A549 (cell line): ENCODE measurements at regions of chr5 and their contacts with region 1.

Region 1: GRCh38 chr5:141040771-141041426 is 10.3 kb upstream of the PCDHB1 start:
- DNase-seq: peak; percentile 89 to 96
- ATAC-seq: peak; percentile 90 to 92
- H3K4me3 ChIP-seq: peak overlapping the region; percentile 48
- H3K27ac ChIP-seq: peak overlapping the region; percentile 56 to 72
- H3K4me1 ChIP-seq: peaks cover 8% of the 10 kb centered on the region; the same call in 1 of the 3 replicates
- CTCF ChIP-seq: peak; percentile 87
- EP300 ChIP-seq: no peak
- POLR2A ChIP-seq: peak; percentile 55
- RAD21 ChIP-seq: peak; percentile 92

Region 2: DNA sequence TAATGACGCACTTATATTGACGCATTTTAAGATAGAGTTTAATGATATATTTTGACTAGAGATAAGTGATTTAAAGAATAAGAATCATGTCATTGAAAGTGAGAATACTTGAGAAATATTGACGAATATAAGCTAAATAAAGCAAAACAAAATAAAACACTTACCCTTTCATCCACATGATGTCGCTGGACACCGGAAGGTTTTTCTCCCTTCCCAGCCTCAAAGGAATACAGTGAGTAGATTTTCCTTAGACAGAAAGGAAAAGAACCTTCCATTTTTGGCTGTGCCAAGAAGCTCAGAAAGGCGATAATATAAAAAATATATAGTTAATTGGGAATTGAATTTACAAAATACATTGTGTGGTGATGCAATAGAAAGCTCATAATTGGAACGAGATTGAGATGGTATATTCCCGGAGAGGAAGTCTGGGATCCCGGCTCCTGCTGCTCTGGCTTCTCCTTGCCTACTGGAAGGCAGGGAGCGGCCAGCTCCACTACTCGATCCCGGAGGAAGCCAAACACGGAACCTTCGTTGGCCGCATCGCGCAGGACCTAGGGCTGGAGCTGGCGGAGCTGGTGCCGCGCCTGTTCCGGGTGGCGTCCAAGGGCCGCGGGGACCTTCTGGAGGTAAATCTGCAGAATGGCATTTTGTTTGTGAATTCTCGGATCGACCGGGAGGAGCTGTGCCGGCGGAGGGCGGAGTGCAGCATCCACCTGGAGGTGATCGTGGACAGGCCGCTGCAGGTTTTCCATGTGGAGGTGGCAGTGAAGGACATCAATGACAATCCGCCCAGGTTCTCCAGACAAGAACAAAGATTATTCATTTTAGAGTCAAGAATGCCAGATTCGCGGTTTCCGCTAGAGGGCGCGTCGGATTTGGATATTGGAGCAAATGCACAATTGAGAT is 219.3 kb before region 1 on chr5 and contains the start of gene PCDHA5:
- CTCF ChIA-PET with region 1: interaction called, 61 read pairs
- POLR2A ChIA-PET with region 1: interaction called, 17 read pairs
- DNase-seq: peak; percentile 69 to 73
- ATAC-seq: peak; percentile 85 to 92
- H3K4me3 ChIP-seq: peak within 1 kb of the TSS; percentile 57
- H3K27ac ChIP-seq: peak within 1 kb of the TSS; percentile 53 to 74
- H3K4me1 ChIP-seq: no peaks in the 10 kb centered on the region
- CTCF ChIP-seq: peak; percentile 63
- EP300 ChIP-seq: no peak
- POLR2A ChIP-seq: no peak
- RAD21 ChIP-seq: peak; percentile 43 to 65; a peak in 4 of 5 replicates
- polyA plus RNA-seq, gene PCDHA5: 0.32 and 0.62 TPM in 2 replicates

Region 3: DNA sequence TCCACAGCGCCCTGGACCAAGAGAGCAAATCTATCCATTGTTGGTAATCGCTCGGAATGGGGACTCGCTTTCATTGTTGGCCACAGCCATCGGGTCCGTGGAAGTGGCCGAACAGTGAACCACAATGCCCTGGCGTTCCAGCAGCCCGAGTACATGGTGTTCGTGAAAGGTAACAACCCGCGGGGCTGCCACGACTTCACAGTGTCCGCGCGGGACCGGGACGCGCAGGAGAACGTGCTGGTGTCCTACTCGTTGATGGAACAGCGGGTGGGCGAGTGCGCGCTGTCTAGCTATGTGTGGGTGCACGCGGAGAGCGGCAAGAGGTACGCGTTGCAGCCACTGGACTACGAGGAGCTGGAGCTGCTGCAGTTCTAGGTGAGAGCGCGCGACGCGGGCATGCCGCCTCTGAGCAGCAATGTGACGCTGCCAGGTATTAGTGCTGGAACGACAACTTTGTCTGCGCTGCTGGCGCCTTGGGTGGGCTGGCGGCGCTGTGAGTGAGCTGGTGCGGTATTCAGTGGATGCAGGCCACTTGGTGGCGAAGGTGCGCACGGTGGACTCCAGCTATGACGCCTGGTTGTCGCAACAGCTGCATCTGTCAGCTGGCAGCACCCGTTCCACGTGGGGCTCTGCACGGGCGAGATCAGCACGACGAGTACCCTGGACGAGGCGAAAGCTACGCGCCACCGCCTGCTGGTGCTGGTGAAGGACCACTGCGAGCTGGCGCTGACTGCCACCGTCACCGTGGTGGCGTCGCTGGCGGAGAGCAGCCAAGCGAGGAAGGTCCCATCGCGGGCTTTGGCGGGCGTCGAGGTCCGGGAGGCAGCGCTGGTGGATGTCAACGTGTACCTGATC is 178.2 kb before region 1 on chr5:
- CTCF ChIA-PET with region 1: interaction called, 18 read pairs
- POLR2A ChIA-PET with region 1: no interaction called
- DNase-seq: no peak
- ATAC-seq: no peak
- H3K4me3 ChIP-seq: no peak overlapping the region
- H3K27ac ChIP-seq: no peak overlapping the region
- H3K4me1 ChIP-seq: no peaks in the 10 kb centered on the region
- CTCF ChIP-seq: no peak
- EP300 ChIP-seq: no peak
- POLR2A ChIP-seq: no peak
- RAD21 ChIP-seq: no peak

Region 4: DNA sequence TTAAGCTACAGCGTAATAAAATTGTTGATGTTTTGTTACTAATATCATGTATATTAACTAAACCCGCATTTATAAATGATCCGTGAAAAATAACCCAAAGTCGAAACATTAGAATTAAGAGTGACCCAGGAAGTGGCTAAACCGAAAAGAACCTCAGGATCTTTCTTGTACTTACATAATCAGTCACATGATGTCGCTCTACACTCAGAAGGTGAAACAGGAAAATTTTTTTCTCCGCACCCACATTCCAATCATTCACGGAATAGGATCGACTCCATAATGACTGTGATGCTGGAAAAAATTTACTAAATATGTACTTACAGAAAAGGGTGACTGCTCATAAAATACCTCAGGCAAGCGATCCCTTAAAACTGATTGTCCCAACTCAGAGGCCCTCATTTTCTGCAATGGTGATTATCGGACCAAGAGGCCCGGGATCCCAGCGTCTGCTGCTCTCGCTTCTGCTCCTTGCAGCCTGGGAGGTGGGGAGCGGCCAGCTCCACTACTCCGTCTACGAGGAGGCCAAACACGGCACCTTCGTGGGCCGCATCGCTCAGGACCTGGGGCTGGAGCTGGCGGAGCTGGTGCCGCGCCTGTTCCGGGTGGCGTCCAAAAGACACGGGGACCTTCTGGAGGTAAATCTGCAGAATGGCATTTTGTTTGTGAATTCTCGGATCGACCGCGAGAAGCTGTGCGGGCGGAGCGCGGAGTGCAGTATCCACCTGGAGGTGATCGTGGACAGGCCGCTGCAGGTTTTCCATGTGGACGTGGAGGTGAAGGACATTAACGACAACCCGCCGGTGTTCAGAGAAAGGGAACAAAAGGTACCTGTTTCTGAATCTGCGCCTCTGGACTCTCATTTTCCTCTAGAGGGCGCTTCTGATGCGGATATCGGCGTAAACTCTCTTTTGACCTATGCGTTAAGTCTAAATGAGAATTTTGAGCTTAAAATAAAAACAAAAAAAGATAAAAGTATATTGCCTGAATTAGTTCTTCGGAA is 165.5 kb before region 1 on chr5 and contains the start of gene PCDHA12:
- CTCF ChIA-PET with region 1: interaction called, 59 read pairs
- POLR2A ChIA-PET with region 1: interaction called, 26 read pairs
- DNase-seq: peak; percentile 67 to 72
- ATAC-seq: peak; percentile 84 to 90
- H3K4me3 ChIP-seq: peak within 1 kb of the TSS; percentile 54
- H3K27ac ChIP-seq: peak within 1 kb of the TSS; percentile 61 to 74
- H3K4me1 ChIP-seq: no peaks in the 10 kb centered on the region
- CTCF ChIP-seq: peak; percentile 68
- EP300 ChIP-seq: no peak
- POLR2A ChIP-seq: no peak
- RAD21 ChIP-seq: peak; percentile 76 to 79
- polyA plus RNA-seq, gene PCDHA12: 2.9 and 3.0 TPM in 2 replicates

Region 5: GRCh38 chr5:141003931-141004611 is 36.8 kb before region 1 on chr5:
- CTCF ChIA-PET with region 1: interaction called, 11 read pairs
- POLR2A ChIA-PET with region 1: interaction called, 5 read pairs
- DNase-seq: peak; percentile 79 to 88
- ATAC-seq: peak; percentile 88 to 90
- H3K4me3 ChIP-seq: no peak overlapping the region
- H3K27ac ChIP-seq: peak overlapping the region; percentile 76 to 79
- H3K4me1 ChIP-seq: peaks cover 37% of the 10 kb centered on the region
- CTCF ChIP-seq: no peak
- EP300 ChIP-seq: peak; percentile 21 to 56; a peak in 1 of 5 replicates
- POLR2A ChIP-seq: no peak
- RAD21 ChIP-seq: no peak